HCT116 (cell line): ENCODE measurements at regions of chr11 and their contacts with region 1.

Region 1: GRCh38 chr11:119666463-119667131 is 62.4 kb downstream of the NECTIN1 start:
- DNase-seq: peak; percentile 18
- ATAC-seq: peak; percentile 99
- H3K4me3 ChIP-seq: no peak overlapping the region
- H3K27ac ChIP-seq: no peak overlapping the region
- H3K4me1 ChIP-seq: no peaks in the 10 kb centered on the region
- H3K27me3 ChIP-seq: no peaks in the 10 kb centered on the region
- CTCF ChIP-seq: peak; percentile 85 to 89 (median 88)
- POLR2A ChIP-seq: no peak
- RAD21 ChIP-seq: peak; percentile 99

Region 2: DNA sequence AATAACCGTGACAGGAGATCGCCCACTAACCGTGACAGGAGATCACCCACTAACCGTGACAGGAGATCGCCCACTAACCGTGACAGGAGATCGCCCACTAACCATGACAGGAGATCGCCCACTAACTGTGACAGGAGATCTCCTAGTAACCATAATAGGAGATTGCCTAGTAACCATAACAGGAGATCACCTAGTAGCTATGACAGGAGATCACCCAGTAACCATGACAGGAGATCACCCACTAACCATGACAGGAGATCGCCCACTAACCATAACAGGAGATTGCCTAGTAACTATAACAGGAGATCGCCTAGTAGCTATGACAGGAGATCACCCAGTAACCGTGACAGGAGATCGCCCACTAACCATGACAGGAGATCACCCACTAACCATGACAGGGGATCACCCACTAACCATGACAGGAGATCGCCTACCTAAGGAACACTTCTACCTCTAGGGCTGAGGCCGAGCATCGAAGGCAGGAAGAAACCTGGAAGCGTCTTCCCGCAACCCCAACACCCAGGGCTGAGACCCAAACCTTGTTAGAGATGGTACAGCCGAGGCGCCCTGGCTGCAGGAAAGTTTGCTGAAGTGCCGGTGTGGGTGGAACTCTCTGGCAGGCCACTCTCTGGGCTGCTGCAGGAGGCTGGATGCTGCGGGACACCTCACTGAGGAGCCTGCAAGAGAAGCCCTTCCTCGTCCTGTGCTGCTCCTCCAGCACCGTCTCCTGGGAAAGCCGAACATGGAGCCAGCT is 176.2 kb before region 1 on chr11:
- CTCF ChIA-PET with region 1: no interaction called
- POLR2A ChIA-PET with region 1: no interaction called
- RAD21 ChIA-PET with region 1: no interaction called
- intact Hi-C with region 1: no loop called
- DNase-seq: no peak
- ATAC-seq: no peak
- H3K4me3 ChIP-seq: no peak overlapping the region
- H3K27ac ChIP-seq: no peak overlapping the region
- H3K4me1 ChIP-seq: peaks cover 0 to under 1% of the 10 kb centered on the region in 2 experiments; a peak in 2 of 4 replicates
- H3K27me3 ChIP-seq: no peaks in the 10 kb centered on the region
- CTCF ChIP-seq: no peak
- POLR2A ChIP-seq: no peak
- RAD21 ChIP-seq: no peak

Region 3: GRCh38 chr11:119728651-119729580 is 62.3 kb after region 1 on chr11 and contains the start of gene NECTIN1:
- CTCF ChIA-PET with region 1: interaction called, 4 read pairs
- POLR2A ChIA-PET with region 1: no interaction called
- RAD21 ChIA-PET with region 1: no interaction called
- intact Hi-C with region 1: loop called (anchors 1 kb)
- DNase-seq: peak; percentile 60
- ATAC-seq: peak; percentile 83
- H3K4me3 ChIP-seq: peak within 1 kb of the TSS; percentile 82 to 94
- H3K27ac ChIP-seq: peak within 1 kb of the TSS; percentile 85
- H3K4me1 ChIP-seq: peaks cover 14 to 28% of the 10 kb centered on the region in 2 experiments
- H3K27me3 ChIP-seq: no peaks in the 10 kb centered on the region
- CTCF ChIP-seq: peak; percentile 80 to 90 (median 81)
- POLR2A ChIP-seq: peak; percentile 89
- RAD21 ChIP-seq: peak; percentile 92
- total RNA-seq, gene NECTIN1: 23.8 TPM

Region 4: GRCh38 chr11:119912229-119912628 is 245.6 kb after region 1 on chr11:
- CTCF ChIA-PET with region 1: no interaction called
- POLR2A ChIA-PET with region 1: no interaction called
- RAD21 ChIA-PET with region 1: no interaction called
- intact Hi-C with region 1: no loop called
- DNase-seq: no peak
- ATAC-seq: no peak
- H3K4me3 ChIP-seq: no peak overlapping the region
- H3K27ac ChIP-seq: no peak overlapping the region
- H3K4me1 ChIP-seq: no peaks in the 10 kb centered on the region
- H3K27me3 ChIP-seq: peaks cover 23% of the 10 kb centered on the region; the same call in 1 of the 2 replicates
- CTCF ChIP-seq: no peak
- POLR2A ChIP-seq: no peak
- RAD21 ChIP-seq: no peak

Region 5: DNA sequence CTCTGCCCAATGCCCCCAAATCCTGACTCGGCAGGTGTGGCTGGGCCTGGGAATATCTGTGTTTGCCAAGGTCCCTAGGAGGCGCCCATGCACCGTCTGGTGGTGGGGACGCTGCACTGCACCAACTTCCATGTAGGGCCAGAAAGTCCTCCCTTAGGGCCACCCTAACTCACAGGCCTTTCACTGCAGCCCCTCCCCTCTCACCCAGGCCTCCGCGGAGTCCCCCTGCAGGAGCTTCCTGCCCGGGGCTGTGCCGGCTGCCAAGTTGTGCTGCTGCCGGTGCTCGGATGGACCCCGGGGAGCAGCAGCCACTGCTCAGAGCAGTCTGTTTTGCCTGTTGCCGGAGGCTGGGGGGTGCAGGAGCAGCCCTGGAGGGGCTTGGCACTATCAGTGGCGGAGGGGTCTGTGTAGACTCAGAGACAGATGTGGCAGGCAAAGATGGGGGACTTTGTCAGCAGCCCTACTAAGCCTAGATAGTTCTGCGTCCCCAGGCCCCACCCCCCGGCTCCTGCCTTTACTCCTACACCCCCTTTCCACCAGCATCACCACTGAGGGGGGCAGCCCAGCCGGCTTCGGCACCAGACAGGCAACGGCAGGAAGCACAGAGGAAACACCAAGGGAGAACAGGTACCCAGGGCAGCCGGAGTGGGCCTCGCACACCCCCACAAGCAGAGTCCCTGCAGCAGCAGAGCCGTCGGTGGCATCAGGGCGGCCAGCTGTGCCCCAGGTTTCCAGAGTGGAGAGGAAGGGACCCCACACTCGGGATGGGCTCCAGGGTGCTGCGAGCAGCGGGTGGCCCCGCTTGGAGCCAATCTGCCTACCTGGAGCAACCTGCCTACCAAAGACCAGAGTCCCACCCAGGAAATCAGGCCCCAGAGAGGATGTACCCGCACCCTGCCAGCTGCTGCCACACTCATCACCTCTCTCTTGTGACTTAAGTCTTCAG is 347.0 kb after region 1 on chr11:
- CTCF ChIA-PET with region 1: no interaction called
- POLR2A ChIA-PET with region 1: no interaction called
- RAD21 ChIA-PET with region 1: no interaction called
- intact Hi-C with region 1: loop called (anchors 1 kb)
- DNase-seq: peak; percentile 37
- ATAC-seq: peak; percentile 98
- H3K4me3 ChIP-seq: no peak overlapping the region
- H3K27ac ChIP-seq: no peak overlapping the region
- H3K4me1 ChIP-seq: no peaks in the 10 kb centered on the region; a peak in 1 of 4 replicates
- H3K27me3 ChIP-seq: peaks cover 41% of the 10 kb centered on the region; the same call in 1 of the 2 replicates
- CTCF ChIP-seq: peak; percentile 77 to 94 (median 81)
- POLR2A ChIP-seq: no peak
- RAD21 ChIP-seq: peak; percentile 89

Region 6: DNA sequence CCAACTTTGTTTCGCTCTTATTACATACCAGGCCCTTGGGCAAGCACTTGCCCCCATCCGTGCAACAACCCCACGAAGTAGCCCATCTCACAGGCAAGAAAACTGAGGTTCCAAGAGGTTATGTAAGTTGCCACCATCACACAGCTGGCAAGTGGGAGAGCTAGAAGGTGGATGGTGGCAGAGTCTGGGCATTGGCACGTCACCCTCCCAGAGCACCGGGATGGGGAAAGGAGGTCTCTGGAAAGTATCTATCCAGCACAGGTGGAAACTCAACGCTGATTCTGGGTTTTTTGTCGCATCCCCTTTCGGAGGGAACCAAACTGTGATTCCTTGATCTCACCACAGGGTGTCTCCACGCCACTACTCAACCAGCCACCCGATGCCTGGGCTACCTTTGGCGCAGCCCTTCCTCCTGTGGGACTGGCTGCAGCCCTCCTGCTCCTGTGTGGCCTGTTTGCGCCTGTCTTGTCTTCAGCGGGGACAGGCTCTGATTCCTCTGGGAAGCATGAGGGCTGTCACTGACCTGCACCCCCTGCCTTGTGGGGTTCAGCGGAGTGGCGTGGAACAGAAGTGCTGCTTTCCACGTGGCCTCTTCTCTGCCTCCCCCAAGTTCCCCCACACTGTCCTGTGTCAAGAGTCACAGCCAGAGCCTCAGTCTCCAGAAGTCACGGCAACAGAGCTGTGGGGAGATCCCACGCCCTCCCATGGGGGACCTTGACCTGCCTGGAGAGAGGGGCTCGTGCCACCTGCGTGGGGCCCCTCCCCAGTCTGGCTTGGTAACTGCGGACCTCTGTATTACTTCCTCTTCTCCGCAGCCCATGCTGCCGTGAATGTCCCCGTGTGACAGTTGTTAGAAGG is 505.7 kb after region 1 on chr11:
- CTCF ChIA-PET with region 1: no interaction called
- POLR2A ChIA-PET with region 1: no interaction called
- RAD21 ChIA-PET with region 1: no interaction called
- intact Hi-C with region 1: loop called (anchors 2 kb)
- DNase-seq: peak; percentile 36
- ATAC-seq: peak; percentile 77
- H3K4me3 ChIP-seq: no peak overlapping the region
- H3K27ac ChIP-seq: no peak overlapping the region
- H3K4me1 ChIP-seq: peaks cover 2 to 14% of the 10 kb centered on the region in 2 experiments; a peak in 1 of 4 replicates
- H3K27me3 ChIP-seq: peaks cover 31% of the 10 kb centered on the region
- CTCF ChIP-seq: peak; percentile 76 to 90 (median 77)
- POLR2A ChIP-seq: no peak
- RAD21 ChIP-seq: peak; percentile 97